ENCODE measurements at regions of chr13 and their contacts with region 1.

Region 1: DNA sequence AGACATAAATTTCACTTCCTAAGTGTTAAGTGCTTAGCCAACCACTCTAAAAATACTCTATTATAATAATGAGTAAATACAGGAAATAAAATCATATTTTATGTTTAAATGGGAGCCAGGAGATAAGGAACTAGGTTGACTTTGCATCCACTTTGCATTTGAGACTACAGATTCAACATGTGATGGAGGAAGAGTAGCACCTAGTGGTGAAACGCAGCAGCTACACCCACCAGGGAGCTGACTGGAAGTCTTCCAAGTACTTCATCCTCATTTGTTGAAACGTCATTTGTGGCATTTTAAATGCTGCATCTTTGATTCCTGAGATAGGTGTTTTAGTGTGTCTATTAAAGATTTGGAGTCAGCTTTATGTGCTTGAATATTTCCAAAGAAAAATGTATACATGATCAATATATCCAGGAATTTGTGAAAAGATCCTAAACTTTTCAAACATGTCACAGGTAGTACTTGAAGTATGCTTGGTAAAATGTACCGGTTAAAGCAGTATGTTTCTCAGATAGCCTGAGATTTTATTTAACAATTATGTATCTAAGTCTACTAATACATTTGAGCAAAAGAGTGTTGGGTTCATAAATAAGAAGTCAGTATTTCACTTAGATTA is 17.4 kb upstream of the KCTD12 start:
- DNase-seq: peak; percentile 60 to 72
- H3K4me3 ChIP-seq: no peak overlapping the region
- H3K4me1 ChIP-seq: no peaks in the 10 kb centered on the region
- H3K27me3 ChIP-seq: peaks cover 22% of the 10 kb centered on the region

Region 2: DNA sequence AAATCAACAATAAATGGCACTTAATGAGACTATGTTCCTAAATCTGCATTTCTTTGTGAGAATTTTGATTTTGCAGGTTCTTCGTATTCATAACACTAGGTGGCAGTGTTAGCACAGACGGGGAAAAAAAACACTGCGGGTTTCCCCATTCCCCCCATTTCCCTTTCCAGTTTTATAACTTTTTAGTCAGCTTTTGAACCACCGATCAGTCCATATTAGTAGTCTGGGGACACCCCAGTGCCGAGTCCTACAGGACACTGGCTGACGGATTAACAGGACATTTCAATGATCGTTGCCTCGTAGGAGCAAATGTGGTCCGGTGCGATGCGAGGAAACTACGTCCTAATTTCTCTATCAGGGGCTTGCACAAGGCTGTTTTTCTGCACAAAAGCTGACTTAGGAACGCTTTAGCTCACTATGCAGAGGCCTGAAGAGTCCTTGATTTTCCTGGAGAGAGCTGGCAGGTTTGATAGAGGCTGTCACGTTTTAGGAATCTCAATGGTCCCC is 1033.2 kb before region 1 on chr13:
- in situ Hi-C with region 1: loop called (anchors 25 kb)
- DNase-seq: peak in 1 of 2 experiments; percentile 23
- H3K4me3 ChIP-seq: no peak overlapping the region
- H3K4me1 ChIP-seq: peaks cover 7% of the 10 kb centered on the region
- H3K27me3 ChIP-seq: peaks cover 9% of the 10 kb centered on the region

Region 3: DNA sequence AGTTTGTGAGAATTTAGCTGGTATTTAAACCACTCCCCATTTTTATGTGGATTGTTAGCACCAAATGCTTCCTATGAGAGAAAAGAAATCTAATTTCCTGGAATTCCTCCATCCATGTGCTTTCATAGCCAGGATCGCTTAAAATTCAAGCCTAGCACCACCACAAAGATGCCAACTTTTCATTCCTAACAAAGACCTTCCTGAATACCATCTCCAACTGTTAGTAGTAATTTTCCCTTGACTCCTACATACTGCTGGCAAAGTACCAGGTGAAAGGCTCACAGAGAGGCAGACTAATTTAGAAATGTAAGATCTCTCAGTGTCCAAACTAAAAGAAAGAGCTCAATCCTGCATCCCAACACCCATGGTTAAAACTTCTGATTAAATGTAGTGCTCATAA is 403.8 kb before region 1 on chr13:
- in situ Hi-C with region 1: loop called (anchors 25 kb)
- DNase-seq: no peak
- H3K4me3 ChIP-seq: no peak overlapping the region
- H3K4me1 ChIP-seq: no peaks in the 10 kb centered on the region
- H3K27me3 ChIP-seq: peaks cover 4% of the 10 kb centered on the region; the same call in 1 of the 2 replicates

Region 4: GRCh38 chr13:77002590-77003190 is 99.0 kb after region 1 on chr13:
- in situ Hi-C with region 1: no loop called
- DNase-seq: no peak
- H3K4me3 ChIP-seq: no peak overlapping the region
- H3K4me1 ChIP-seq: peaks cover 5% of the 10 kb centered on the region
- H3K27me3 ChIP-seq: no peaks in the 10 kb centered on the region